CD8-positive, alpha-beta T cell (primary cell): ENCODE measurements at regions of chr2 and their contacts with region 1.

Region 1: DNA sequence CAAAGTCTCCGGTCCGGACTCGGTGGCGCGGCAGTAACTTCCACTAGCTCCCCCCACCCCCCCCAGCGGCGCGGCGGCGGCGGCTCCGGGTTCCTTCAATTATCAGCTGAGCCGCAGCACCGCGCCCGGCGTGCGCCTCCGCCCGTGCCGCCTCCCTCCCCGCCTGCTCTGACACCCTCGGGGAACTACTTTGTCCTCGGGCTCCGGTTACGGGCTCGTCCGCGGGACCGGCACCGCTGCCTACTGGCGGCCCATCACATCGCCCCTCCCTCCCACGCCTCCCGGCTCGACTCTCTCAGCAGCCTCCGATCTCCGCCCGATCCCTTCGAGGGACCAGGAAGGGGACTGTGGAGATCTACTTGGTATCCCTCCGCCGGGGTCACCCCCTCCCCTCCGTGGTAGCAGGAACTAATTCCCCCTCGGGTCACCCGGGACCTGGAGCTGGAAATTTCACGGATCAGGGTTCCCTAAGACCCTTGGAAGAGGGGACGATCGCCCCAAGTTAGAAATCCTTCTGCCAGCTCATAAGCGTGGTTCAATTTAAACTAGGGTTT is at the start of gene TRIP12:
- DNase-seq: peak; percentile 72 to 95 (median 87)
- ATAC-seq: peak; percentile 73
- H3K4me3 ChIP-seq: peak within 1 kb of the TSS; percentile 88 to 99
- H3K4me3 Mint-ChIP-seq: peak within 1 kb of the TSS; percentile 99
- H3K27ac ChIP-seq: peak within 1 kb of the TSS; percentile 88 to 96
- H3K27ac Mint-ChIP-seq: peak within 1 kb of the TSS; percentile 99
- H3K4me1 ChIP-seq: peaks cover 35% of the 10 kb centered on the region
- H3K4me1 Mint-ChIP-seq: peaks cover 49% of the 10 kb centered on the region
- H3K27me3 ChIP-seq: no peaks in the 10 kb centered on the region
- H3K27me3 Mint-ChIP-seq: no peaks in the 10 kb centered on the region
- CTCF ChIP-seq: no peak
- total RNA-seq, gene TRIP12: 156 to 167 TPM

Region 2: GRCh38 chr2:229825476-229825875 is 96.5 kb before region 1 on chr2:
- CTCF ChIA-PET with region 1: no interaction called
- POLR2A ChIA-PET with region 1: no interaction called
- intact Hi-C with region 1: loop called in 1 of 2 experiments (anchors 5 kb)
- DNase-seq: no peak
- ATAC-seq: no peak
- H3K4me3 ChIP-seq: no peak overlapping the region
- H3K4me3 Mint-ChIP-seq: no peak overlapping the region
- H3K27ac ChIP-seq: no peak overlapping the region
- H3K27ac Mint-ChIP-seq: no peak overlapping the region
- H3K4me1 ChIP-seq: no peaks in the 10 kb centered on the region
- H3K4me1 Mint-ChIP-seq: peaks cover 15% of the 10 kb centered on the region
- H3K27me3 ChIP-seq: no peaks in the 10 kb centered on the region
- H3K27me3 Mint-ChIP-seq: no peaks in the 10 kb centered on the region
- CTCF ChIP-seq: no peak

Region 3: DNA sequence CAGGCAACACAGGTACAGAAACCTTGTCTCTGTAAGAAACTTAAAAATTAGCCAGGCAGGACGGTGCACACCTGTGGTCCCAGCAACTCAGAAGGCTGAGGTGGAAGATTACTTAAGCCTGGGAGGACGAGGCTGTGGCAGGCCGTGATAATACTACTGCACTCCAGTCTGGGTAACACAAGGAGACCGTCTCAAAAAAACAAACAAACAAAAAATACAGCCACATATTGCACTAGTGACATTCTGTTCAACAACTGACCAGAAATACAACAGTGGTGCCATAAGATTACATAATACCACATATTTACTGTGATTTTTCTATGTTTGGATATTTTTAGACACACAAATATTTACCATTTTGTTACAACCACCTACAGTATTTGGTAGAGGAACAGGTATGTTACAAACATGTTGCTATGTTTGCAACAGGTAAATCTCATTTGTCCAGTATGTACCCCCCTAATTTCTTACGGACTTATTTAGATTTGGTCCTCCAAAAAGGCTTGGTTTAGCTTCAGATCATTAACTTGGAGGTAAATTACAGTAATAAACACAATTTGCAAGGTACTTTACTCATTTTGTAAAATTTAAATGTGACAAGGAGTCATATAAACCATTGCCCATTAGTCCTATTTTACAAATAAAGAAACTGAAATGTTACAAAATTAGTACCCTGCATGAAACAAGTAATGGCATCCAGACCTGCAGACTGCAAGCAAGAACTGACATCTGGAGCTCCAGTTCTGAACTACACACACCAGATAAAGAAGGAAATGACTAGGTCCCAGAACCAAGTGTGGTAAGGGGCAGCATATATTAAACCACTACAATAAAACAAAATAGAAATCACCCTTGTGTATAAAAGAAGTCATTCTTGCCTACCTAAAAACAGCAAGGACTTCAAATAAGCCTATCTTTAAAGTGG is 36.9 kb before region 1 on chr2:
- CTCF ChIA-PET with region 1: no interaction called
- POLR2A ChIA-PET with region 1: no interaction called
- intact Hi-C with region 1: no loop called
- DNase-seq: no peak
- ATAC-seq: no peak
- H3K4me3 ChIP-seq: no peak overlapping the region
- H3K4me3 Mint-ChIP-seq: no peak overlapping the region
- H3K27ac ChIP-seq: no peak overlapping the region
- H3K27ac Mint-ChIP-seq: no peak overlapping the region
- H3K4me1 ChIP-seq: peaks cover 5% of the 10 kb centered on the region
- H3K4me1 Mint-ChIP-seq: peaks cover 64% of the 10 kb centered on the region
- H3K27me3 ChIP-seq: no peaks in the 10 kb centered on the region
- H3K27me3 Mint-ChIP-seq: no peaks in the 10 kb centered on the region
- CTCF ChIP-seq: no peak

Region 4: GRCh38 chr2:229910832-229911412 is 11.0 kb before region 1 on chr2:
- CTCF ChIA-PET with region 1: interaction called, 3 read pairs
- POLR2A ChIA-PET with region 1: interaction called, 15 read pairs
- intact Hi-C with region 1: no loop called
- DNase-seq: peak in 3 of 9 experiments; percentile 14 to 62 (median 50)
- ATAC-seq: peak; percentile 75
- H3K4me3 ChIP-seq: no peak overlapping the region
- H3K4me3 Mint-ChIP-seq: no peak overlapping the region
- H3K27ac ChIP-seq: no peak overlapping the region
- H3K27ac Mint-ChIP-seq: peak overlapping the region; percentile 81
- H3K4me1 ChIP-seq: peaks cover 14% of the 10 kb centered on the region
- H3K4me1 Mint-ChIP-seq: peaks cover 62% of the 10 kb centered on the region
- H3K27me3 ChIP-seq: no peaks in the 10 kb centered on the region
- H3K27me3 Mint-ChIP-seq: no peaks in the 10 kb centered on the region
- CTCF ChIP-seq: peak; percentile 44

Region 5: DNA sequence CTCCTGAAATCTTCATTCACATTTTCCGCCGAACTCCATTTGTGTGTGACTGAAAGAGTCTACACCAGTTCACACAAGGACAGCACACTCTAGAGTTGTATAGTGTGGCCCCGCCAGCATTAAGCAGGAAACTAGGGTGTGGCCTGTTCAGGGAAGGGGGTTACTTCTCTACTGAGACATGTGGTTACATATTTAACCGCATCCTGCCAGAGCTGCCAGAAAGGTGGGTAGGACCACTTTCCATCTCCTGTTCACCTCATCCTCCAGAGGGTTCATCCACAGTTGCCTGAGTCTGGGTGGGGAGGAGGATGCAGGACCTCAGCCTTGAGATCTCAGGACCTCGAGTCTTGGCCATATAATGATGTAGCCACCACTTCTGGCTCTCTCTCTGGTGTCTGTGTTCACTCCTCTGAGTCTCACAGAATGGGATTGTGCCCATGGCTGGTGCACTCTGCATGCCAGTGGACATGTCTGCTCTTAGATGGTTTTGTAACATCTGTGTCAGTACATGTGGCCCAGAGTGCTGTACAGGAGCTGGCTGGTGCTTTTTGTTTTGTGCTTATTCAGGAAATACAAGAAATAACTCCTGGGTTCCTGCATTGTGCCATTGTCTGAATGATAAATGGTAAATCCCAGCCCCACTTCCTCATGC is 397.4 kb after region 1 on chr2:
- CTCF ChIA-PET with region 1: no interaction called
- POLR2A ChIA-PET with region 1: no interaction called
- intact Hi-C with region 1: loop called in 1 of 2 experiments (anchors 2 kb)
- DNase-seq: peak; percentile 37 to 92 (median 76)
- ATAC-seq: peak; percentile 96
- H3K4me3 ChIP-seq: peak overlapping the region; percentile 7 to 24
- H3K4me3 Mint-ChIP-seq: peak overlapping the region; percentile 63
- H3K27ac ChIP-seq: peak overlapping the region; percentile 58 to 61
- H3K27ac Mint-ChIP-seq: peak overlapping the region; percentile 89
- H3K4me1 ChIP-seq: peaks cover 52% of the 10 kb centered on the region
- H3K4me1 Mint-ChIP-seq: peaks cover 69% of the 10 kb centered on the region
- H3K27me3 ChIP-seq: no peaks in the 10 kb centered on the region
- H3K27me3 Mint-ChIP-seq: no peaks in the 10 kb centered on the region
- CTCF ChIP-seq: no peak

Region 6: GRCh38 chr2:230411570-230412370 is 489.8 kb after region 1 on chr2:
- CTCF ChIA-PET with region 1: no interaction called
- POLR2A ChIA-PET with region 1: no interaction called
- intact Hi-C with region 1: loop called in 1 of 2 experiments (anchors 5 kb)
- DNase-seq: peak in 8 of 9 experiments; percentile 37 to 83 (median 59)
- ATAC-seq: peak; percentile 67
- H3K4me3 ChIP-seq: peak overlapping the region; percentile 88 to 92
- H3K4me3 Mint-ChIP-seq: peak overlapping the region; percentile 100
- H3K27ac ChIP-seq: peak overlapping the region; percentile 83 to 92
- H3K27ac Mint-ChIP-seq: peak overlapping the region; percentile 100
- H3K4me1 ChIP-seq: peaks cover 53% of the 10 kb centered on the region
- H3K4me1 Mint-ChIP-seq: peaks cover 81% of the 10 kb centered on the region
- H3K27me3 ChIP-seq: no peaks in the 10 kb centered on the region
- H3K27me3 Mint-ChIP-seq: no peaks in the 10 kb centered on the region
- CTCF ChIP-seq: no peak

Region 7: DNA sequence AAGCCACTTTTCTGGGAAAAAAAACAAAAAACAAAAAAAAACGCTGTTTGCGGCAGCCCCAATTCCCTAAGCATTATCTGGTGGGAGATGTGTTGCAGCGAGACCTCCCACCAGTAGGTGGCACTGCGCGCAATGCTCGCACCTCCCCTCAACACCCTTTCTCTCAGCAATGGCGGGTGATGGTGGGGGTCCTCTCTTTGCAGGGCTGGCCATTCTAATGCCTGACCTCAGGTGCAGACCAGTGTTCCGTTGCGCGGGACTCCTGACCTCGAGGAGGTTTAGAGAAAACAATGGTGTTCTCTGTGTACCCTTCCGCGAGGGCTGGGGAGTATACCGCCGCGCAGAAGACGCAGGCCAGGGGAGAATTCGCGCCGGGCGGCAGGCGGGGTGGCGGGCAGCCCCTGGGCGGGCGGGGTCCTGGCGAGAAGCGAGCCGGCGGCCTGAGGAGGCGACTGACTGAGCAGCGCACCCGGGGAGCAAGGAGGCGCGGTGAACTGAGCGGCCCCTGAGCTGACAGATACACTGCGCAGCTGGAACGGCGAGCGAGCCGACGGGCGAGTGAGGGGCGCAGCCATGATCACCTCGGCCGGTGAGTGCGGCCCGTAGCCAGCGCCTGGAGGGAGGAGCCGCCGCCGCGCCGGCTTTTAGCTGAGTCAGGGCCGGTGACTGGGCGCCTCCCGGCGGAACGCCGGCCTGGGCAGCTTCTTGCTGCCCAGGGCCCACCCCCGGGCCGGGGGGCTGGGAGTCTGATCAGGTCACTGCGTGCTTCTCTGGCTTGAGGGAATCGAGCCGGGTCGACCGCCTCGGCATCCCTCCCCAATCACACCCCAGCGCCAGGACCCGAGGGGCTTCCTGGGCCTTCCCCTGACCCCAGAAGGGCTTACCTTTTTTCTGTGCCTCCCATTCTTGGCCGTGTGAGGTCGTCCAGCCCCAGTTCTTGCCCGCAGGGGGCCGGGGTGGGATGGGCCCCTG is 1134.8 kb after region 1 on chr2 and contains the start of gene PSMD1:
- CTCF ChIA-PET with region 1: no interaction called
- POLR2A ChIA-PET with region 1: no interaction called
- intact Hi-C with region 1: loop called (anchors 2 to 5 kb)
- DNase-seq: peak; percentile 90 to 97 (median 93)
- ATAC-seq: peak; percentile 85
- H3K4me3 ChIP-seq: peak within 1 kb of the TSS; percentile 83 to 87
- H3K4me3 Mint-ChIP-seq: peak within 1 kb of the TSS; percentile 99
- H3K27ac ChIP-seq: peak within 1 kb of the TSS; percentile 70 to 84
- H3K27ac Mint-ChIP-seq: peak within 1 kb of the TSS; percentile 100
- H3K4me1 ChIP-seq: peaks cover 29% of the 10 kb centered on the region
- H3K4me1 Mint-ChIP-seq: peaks cover 55% of the 10 kb centered on the region
- H3K27me3 ChIP-seq: no peaks in the 10 kb centered on the region
- H3K27me3 Mint-ChIP-seq: peaks cover 8% of the 10 kb centered on the region
- CTCF ChIP-seq: peak; percentile 93
- total RNA-seq, gene PSMD1: 31.0 to 33.9 TPM

Region 8: GRCh38 chr2:231706731-231707624 is 1785.0 kb after region 1 on chr2:
- CTCF ChIA-PET with region 1: no interaction called
- POLR2A ChIA-PET with region 1: no interaction called
- intact Hi-C with region 1: loop called in 1 of 2 experiments (anchors 5 kb)
- DNase-seq: peak; percentile 93 to 99 (median 97)
- ATAC-seq: peak; percentile 50
- H3K4me3 ChIP-seq: peak overlapping the region; percentile 85 to 92
- H3K4me3 Mint-ChIP-seq: peak overlapping the region; percentile 98
- H3K27ac ChIP-seq: peak overlapping the region; percentile 95 to 97
- H3K27ac Mint-ChIP-seq: peak overlapping the region; percentile 100
- H3K4me1 ChIP-seq: peaks cover 25% of the 10 kb centered on the region
- H3K4me1 Mint-ChIP-seq: peaks cover 31% of the 10 kb centered on the region
- H3K27me3 ChIP-seq: no peaks in the 10 kb centered on the region
- H3K27me3 Mint-ChIP-seq: no peaks in the 10 kb centered on the region
- CTCF ChIP-seq: peak; percentile 83